K562 (cell line): ENCODE measurements at regions of chr12 and their contacts with region 1.

Region 1: DNA sequence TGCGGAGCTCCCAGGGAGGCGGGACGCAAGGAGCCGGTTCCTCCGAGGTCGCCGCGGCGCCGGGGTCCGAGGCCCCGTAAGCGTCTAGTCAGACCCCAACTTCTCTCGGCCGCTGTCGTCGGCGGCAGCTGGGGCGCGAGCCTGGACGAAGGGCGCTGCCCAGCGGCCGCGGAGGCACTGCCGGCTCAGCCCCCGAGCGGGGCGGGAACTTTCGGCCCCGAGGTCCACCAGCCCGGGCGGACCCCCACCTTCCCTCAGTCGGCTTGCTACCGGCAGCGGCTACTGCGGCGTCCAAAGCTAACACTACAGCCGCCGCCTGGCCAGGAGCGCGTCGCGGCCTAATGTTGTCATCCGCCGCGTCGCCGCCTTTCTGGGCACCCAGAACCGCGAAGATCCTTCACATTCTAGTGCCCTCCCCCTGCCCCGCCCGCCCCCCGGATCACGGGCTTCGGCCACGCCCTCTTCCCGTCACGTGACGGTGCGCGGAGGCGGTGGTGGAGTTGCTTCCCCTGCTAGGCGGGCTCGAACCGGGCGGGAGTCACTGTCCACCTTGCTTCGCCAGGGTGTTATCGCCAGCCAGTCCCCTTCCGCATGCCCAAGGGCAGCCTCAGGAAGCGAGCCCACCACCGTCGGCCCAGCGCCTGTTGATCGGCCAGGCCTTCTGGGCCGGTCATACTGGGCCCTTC is at the start of gene OSBPL8:
- DNase-seq: peak; percentile 94 to 98 (median 95)
- ATAC-seq: peak; percentile 84
- H3K4me3 ChIP-seq: peak within 1 kb of the TSS; percentile 95
- H3K27ac ChIP-seq: peak within 1 kb of the TSS; percentile 95
- H3K4me1 ChIP-seq: peaks cover 14 to 25% of the 10 kb centered on the region in 2 experiments
- H3K27me3 ChIP-seq: no peaks in the 10 kb centered on the region
- CTCF ChIP-seq: peak in 2 of 3 experiments; percentile 27 to 42; a peak in 2 of 6 replicates
- EP300 ChIP-seq: no peak
- POLR2A ChIP-seq: peak; percentile 97
- RAD21 ChIP-seq: peak; percentile 35 to 41
- polyA plus RNA-seq, gene OSBPL8: 17.4 to 19.9 TPM

Region 2: GRCh38 chr12:76083904-76084862 is 475.4 kb before region 1 on chr12 and contains the start of gene NAP1L1:
- CTCF ChIA-PET with region 1: no interaction called
- POLR2A ChIA-PET with region 1: no interaction called
- in situ Hi-C with region 1: no loop called
- intact Hi-C with region 1: loop called (anchors 10 kb)
- DNase-seq: peak; percentile 90 to 98 (median 93)
- ATAC-seq: peak; percentile 91
- H3K4me3 ChIP-seq: peak within 1 kb of the TSS; percentile 91
- H3K27ac ChIP-seq: peak within 1 kb of the TSS; percentile 93
- H3K4me1 ChIP-seq: peaks cover 16 to 38% of the 10 kb centered on the region in 2 experiments
- H3K27me3 ChIP-seq: no peaks in the 10 kb centered on the region
- CTCF ChIP-seq: peak in 2 of 3 experiments; percentile 9 to 23; a peak in 1 of 6 replicates
- EP300 ChIP-seq: 0 out of 2 replicates have a peak, but pooled peaks have one; percentile 4
- POLR2A ChIP-seq: peak; percentile 93
- RAD21 ChIP-seq: no peak; a peak in 1 of 4 replicates
- polyA plus RNA-seq, gene NAP1L1: 287 to 326 TPM

Region 3: GRCh38 chr12:76277480-76277879 is 282.1 kb before region 1 on chr12:
- CTCF ChIA-PET with region 1: no interaction called
- POLR2A ChIA-PET with region 1: no interaction called
- in situ Hi-C with region 1: no loop called
- intact Hi-C with region 1: no loop called
- DNase-seq: no peak
- ATAC-seq: no peak
- H3K4me3 ChIP-seq: no peak overlapping the region
- H3K27ac ChIP-seq: no peak overlapping the region
- H3K4me1 ChIP-seq: no peaks in the 10 kb centered on the region
- H3K27me3 ChIP-seq: peaks cover 0 to 13% of the 10 kb centered on the region in 2 experiments; a peak in 2 of 5 replicates
- CTCF ChIP-seq: no peak
- EP300 ChIP-seq: no peak
- POLR2A ChIP-seq: no peak
- RAD21 ChIP-seq: no peak

Region 4: GRCh38 chr12:76402259-76402658 is 157.3 kb before region 1 on chr12:
- CTCF ChIA-PET with region 1: no interaction called
- POLR2A ChIA-PET with region 1: no interaction called
- in situ Hi-C with region 1: no loop called
- intact Hi-C with region 1: loop called (anchors 5 kb)
- DNase-seq: peak; percentile 28 to 79 (median 56)
- ATAC-seq: peak; percentile 98
- H3K4me3 ChIP-seq: no peak overlapping the region
- H3K27ac ChIP-seq: no peak overlapping the region
- H3K4me1 ChIP-seq: peaks cover 0 to 7% of the 10 kb centered on the region in 2 experiments; a peak in 1 of 5 replicates
- H3K27me3 ChIP-seq: no peaks in the 10 kb centered on the region
- CTCF ChIP-seq: no peak
- EP300 ChIP-seq: peak; percentile 85
- POLR2A ChIP-seq: no peak
- RAD21 ChIP-seq: no peak

Region 5: DNA sequence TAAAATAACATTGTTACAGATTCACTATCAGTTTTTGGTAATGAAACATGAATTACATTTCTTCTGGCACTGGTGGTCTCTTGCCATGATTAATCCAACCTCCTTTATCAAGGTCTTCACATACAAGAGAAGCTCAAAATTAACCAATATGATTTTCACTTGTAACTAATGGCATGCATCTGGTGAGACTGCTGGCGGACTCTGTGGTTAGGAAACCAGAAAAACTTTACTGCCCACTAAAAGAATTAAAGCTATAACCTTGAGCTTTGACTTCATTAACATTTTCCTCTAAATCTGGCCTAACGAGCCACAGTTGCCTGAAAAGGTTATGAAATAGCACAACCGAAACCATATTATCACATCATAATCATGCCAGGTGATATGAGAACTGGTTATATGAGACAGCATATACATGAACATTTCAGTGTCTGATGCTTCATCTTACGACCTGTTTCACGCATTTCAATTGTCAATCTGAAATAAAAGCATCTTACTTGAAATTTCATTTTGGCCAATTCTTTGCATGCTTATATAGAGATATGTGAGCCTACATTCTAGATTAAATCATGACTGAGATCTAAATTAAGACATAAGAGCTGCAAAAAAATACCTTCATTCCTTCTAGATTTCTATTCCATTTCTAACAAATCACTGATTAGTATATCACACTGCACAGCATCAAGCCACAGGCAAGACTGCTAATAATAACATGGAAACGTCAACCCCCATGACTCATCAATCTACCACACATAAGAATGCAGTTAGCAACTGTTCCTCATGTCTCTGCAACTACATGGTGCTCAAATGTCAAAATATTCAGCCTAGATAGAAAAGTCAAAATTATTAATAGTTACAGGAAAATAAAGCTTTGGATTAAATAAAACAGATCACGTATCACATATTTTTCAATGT is 89.3 kb before region 1 on chr12:
- CTCF ChIA-PET with region 1: no interaction called
- POLR2A ChIA-PET with region 1: no interaction called
- in situ Hi-C with region 1: no loop called
- intact Hi-C with region 1: loop called (anchors 5 kb)
- DNase-seq: peak; percentile 28 to 71 (median 48)
- ATAC-seq: peak; percentile 95
- H3K4me3 ChIP-seq: no peak overlapping the region
- H3K27ac ChIP-seq: no peak overlapping the region
- H3K4me1 ChIP-seq: peaks cover 0 to 16% of the 10 kb centered on the region in 2 experiments; a peak in 2 of 5 replicates
- H3K27me3 ChIP-seq: no peaks in the 10 kb centered on the region
- CTCF ChIP-seq: no peak
- EP300 ChIP-seq: peak; percentile 39; the same call in 1 of the 2 replicates
- POLR2A ChIP-seq: no peak
- RAD21 ChIP-seq: no peak

Region 6: DNA sequence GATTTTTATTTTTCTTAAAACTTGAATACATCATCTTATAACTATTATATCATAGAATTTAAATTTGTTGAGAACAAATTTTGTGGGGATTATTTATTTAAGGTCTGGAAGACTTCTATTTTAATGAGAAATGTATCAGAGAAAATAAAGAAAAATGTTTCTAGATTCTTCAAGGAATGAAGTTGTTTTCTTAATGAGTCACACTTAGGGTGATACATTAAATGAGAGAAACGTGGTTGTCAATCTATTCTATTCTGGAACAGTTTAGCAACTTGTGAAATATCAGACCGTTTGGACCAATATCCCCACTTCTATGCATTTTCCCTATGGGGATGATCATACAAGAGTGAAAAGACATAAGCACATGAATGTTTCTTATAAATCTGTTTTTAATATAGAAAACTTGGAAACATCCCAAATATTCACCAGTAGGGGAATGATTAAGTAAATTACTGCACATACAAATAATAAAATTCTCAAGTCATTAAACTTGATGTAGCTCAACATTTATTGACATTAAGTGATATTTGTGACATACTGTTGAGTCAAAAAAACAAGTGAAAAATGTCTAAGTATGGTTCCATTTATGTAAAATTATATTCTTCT is 417.3 kb after region 1 on chr12:
- CTCF ChIA-PET with region 1: no interaction called
- POLR2A ChIA-PET with region 1: no interaction called
- in situ Hi-C with region 1: no loop called
- intact Hi-C with region 1: no loop called
- DNase-seq: no peak
- ATAC-seq: no peak
- H3K4me3 ChIP-seq: no peak overlapping the region
- H3K27ac ChIP-seq: no peak overlapping the region
- H3K4me1 ChIP-seq: no peaks in the 10 kb centered on the region
- H3K27me3 ChIP-seq: no peaks in the 10 kb centered on the region
- CTCF ChIP-seq: no peak
- EP300 ChIP-seq: no peak
- POLR2A ChIP-seq: no peak
- RAD21 ChIP-seq: no peak